PC-9 (cell line): ENCODE measurements at regions of chr2 and their contacts with region 1.

Region 1: GRCh38 chr2:148218326-148219075 is 197.6 kb downstream of the MBD5 start:
- DNase-seq: no peak
- H3K4me3 ChIP-seq: no peak overlapping the region
- H3K27ac ChIP-seq: no peak overlapping the region
- H3K4me1 ChIP-seq: no peaks in the 10 kb centered on the region
- H3K27me3 ChIP-seq: no peaks in the 10 kb centered on the region
- CTCF ChIP-seq: no peak

Region 2: DNA sequence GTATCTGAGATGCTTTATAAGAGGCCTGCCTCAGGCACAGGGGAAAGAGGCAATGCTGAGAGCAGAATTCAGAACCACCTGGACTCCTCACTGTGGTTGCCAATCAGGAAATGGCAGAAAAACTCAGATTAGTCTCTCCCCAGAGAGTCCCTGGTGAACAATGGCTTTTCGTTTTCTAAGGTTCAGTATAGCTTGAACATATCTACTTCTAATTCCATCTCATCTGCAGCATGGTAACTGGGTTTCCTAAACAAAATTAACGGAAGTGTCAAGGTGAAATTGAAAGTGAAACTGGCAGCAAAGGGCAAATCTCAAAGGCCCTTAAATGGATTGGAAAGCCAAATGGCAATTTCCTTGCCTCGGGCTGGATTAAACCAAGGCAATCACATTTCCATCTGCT is 853.9 kb before region 1 on chr2:
- CTCF ChIA-PET with region 1: interaction called, 17 read pairs
- POLR2A ChIA-PET with region 1: no interaction called
- intact Hi-C with region 1: no loop called
- DNase-seq: no peak
- H3K4me3 ChIP-seq: no peak overlapping the region
- H3K27ac ChIP-seq: no peak overlapping the region
- H3K4me1 ChIP-seq: no peaks in the 10 kb centered on the region
- H3K27me3 ChIP-seq: no peaks in the 10 kb centered on the region
- CTCF ChIP-seq: no peak

Region 3: DNA sequence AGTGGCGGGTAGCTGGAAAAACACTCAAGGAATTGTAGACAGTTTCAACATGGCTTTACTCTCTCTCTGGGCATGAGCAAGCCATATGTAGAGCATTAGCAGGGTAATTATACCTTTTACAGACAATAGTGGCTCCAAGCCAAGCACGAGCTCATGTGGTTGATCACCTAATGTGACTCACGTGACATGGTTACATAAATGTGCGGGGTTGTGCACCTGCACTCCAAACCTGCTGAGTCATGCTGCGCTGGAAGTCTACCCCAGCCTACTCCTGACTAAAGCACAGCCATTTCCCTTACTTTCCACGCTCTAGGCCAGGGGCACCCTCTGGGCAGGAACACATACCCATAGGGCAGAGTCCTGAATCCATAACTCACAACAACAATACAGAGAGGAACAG is 35.2 kb after region 1 on chr2:
- CTCF ChIA-PET with region 1: no interaction called
- POLR2A ChIA-PET with region 1: no interaction called
- intact Hi-C with region 1: no loop called
- DNase-seq: no peak
- H3K4me3 ChIP-seq: no peak overlapping the region
- H3K27ac ChIP-seq: no peak overlapping the region
- H3K4me1 ChIP-seq: no peaks in the 10 kb centered on the region
- H3K27me3 ChIP-seq: no peaks in the 10 kb centered on the region
- CTCF ChIP-seq: no peak

Region 4: DNA sequence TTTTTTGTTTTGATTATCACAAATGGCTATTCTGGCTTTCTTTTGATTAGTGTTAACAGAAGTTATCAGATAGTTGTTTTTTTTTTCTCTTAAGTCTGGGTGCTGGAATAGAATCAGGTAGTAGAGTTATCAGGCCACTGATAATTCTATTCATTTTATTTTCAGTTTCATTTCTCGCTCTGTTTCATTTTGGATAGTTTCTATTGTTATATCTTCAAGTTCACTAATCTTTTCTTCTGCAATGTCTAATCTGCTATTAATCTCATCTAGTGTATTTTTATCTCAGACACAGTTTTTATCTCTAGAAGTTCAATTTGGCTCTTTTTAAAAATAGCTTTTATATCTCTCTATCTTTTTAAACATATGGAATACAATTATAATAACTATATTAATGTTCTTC is 184.3 kb after region 1 on chr2:
- CTCF ChIA-PET with region 1: no interaction called
- POLR2A ChIA-PET with region 1: no interaction called
- intact Hi-C with region 1: no loop called
- DNase-seq: no peak
- H3K4me3 ChIP-seq: no peak overlapping the region
- H3K27ac ChIP-seq: no peak overlapping the region
- H3K4me1 ChIP-seq: no peaks in the 10 kb centered on the region
- H3K27me3 ChIP-seq: no peaks in the 10 kb centered on the region
- CTCF ChIP-seq: no peak

Region 5: GRCh38 chr2:148861366-148861765 is 642.9 kb after region 1 on chr2:
- CTCF ChIA-PET with region 1: no interaction called
- POLR2A ChIA-PET with region 1: interaction called, 16 read pairs
- intact Hi-C with region 1: no loop called
- DNase-seq: no peak
- H3K4me3 ChIP-seq: no peak overlapping the region
- H3K27ac ChIP-seq: no peak overlapping the region
- H3K4me1 ChIP-seq: no peaks in the 10 kb centered on the region
- H3K27me3 ChIP-seq: no peaks in the 10 kb centered on the region
- CTCF ChIP-seq: no peak